ENCODE measurements at regions of chr11 and their contacts with region 1.

Region 1: DNA sequence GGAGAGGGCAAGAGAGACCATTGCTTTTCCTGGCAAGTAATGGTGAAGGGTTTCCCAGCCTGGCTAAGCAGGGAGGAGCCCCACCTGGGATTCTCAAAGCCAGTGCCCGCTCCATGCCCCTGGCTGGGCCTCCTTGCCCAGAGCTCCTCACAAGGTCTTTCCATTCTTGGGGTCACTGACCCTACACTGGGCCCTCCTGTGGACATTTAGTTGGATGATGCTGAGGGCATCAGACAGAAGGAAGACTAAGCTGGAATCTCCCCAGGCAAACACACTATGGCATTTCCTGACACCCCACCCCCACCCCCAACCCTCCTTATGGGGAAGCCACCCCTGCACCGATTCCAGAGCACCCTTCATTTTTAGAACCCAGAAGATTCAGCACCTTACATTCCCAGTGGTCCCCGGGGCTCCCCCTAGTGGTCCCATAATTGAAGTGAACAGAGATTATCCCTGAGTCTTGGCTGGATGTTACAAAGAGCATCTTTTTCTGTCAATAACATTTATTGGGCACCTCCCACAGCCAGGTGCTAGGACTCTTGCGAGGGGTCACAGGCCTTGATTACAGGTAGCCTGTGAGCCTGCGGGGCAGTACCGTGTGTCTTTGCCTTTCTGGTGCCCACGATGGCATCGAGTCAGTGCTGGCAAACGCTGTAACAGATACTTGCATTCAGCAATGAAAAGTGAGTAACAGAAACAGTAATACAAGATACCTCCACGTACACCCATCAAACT is 548.5 kb downstream of the BUD13 start:
- DNase-seq: no peak
- H3K4me3 Mint-ChIP-seq: no peak overlapping the region
- H3K27ac Mint-ChIP-seq: no peak overlapping the region
- H3K4me1 Mint-ChIP-seq: no peaks in the 10 kb centered on the region
- H3K27me3 Mint-ChIP-seq: no peaks in the 10 kb centered on the region

Region 2: DNA sequence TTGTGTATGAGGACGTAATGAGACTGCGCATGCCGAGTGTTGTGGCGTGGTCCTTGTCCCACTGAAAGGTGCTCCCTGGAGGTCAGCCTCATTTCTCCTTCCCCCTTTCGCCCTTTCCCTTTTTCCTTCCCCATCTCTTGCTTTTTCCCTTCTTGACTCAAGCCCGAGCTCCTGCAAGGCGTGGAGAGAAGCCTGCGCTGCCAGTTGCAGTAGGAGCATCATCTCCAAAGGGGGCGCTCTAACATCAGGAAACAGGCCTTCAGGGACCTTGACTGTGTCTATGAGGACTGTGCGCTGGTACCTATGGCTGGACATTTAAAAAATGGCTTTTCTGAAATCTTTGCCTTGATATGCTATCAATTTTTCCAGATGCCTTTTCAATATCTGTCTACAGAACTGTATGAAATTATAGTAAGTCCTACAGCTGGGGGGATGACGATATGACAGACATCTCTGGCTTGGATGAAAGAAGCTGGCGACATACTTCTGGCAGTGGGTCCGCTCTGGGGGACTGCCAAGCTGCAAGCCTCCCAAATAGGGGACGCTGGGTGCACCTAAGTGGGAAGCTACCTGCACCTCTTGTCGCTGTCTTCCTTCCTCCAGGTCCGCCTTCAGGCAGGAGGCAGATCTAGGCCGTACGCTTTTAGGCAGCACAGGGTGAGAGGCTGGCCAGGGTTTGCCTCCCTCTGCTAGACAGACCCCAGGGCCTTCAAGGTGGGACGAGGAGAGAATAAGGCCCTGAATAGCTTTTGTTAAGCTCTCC is 1449.5 kb before region 1 on chr11:
- intact Hi-C with region 1: loop called (anchors 10 kb)
- DNase-seq: no peak
- H3K4me3 Mint-ChIP-seq: no peak overlapping the region
- H3K27ac Mint-ChIP-seq: no peak overlapping the region
- H3K4me1 Mint-ChIP-seq: peaks cover 3% of the 10 kb centered on the region
- H3K27me3 Mint-ChIP-seq: no peaks in the 10 kb centered on the region

Measured in activated T-helper 2 cell treated with anti-CD3 and anti-CD28 coated beads, Interferon-gamma antibody, Interleukin-2, Interleukin-4, amounts not matched to agents 10 μg/mL and 5 μg/mL and 100 μg/mL, durations not matched to agents 14 hours and 24 hours and 36 hours (primary cell).